Activated CD4-positive, alpha-beta memory T cell treated with anti-CD3 and anti-CD28 coated beads for 36 hours (primary cell): ENCODE measurements at regions of chr17 and their contacts with region 1.

Region 1: DNA sequence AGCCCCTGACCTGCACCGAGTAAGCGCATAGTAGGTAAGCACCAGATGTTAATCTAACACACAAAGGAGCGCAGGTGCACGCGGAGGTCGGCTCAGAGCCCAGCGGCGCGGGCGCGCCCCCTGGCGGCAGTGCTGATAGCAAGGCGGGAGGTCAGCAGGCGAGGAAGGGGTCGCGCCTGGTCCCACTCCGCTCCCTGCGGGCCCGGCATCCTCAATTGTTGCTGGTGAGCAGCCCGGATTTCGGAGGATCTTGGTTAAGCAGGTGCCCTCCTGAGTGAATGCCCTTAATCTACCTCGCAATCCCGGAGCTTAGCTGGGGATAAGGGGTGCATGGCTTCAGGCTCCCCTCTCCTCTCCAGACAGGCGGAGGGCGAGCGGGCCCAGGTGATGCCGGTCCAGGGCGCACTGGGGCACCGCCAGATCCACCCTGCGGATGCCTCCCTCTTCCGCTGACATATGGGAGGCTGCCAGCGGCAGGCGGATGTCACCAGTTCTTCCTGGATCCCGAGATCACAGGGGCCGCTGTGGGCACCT is 4.0 kb upstream of the WNT3 start:
- DNase-seq: peak; percentile 56
- H3K4me3 Mint-ChIP-seq: no peak overlapping the region
- H3K27ac Mint-ChIP-seq: no peak overlapping the region
- H3K4me1 Mint-ChIP-seq: peaks cover 11% of the 10 kb centered on the region
- H3K27me3 Mint-ChIP-seq: peaks cover 45% of the 10 kb centered on the region

Region 2: DNA sequence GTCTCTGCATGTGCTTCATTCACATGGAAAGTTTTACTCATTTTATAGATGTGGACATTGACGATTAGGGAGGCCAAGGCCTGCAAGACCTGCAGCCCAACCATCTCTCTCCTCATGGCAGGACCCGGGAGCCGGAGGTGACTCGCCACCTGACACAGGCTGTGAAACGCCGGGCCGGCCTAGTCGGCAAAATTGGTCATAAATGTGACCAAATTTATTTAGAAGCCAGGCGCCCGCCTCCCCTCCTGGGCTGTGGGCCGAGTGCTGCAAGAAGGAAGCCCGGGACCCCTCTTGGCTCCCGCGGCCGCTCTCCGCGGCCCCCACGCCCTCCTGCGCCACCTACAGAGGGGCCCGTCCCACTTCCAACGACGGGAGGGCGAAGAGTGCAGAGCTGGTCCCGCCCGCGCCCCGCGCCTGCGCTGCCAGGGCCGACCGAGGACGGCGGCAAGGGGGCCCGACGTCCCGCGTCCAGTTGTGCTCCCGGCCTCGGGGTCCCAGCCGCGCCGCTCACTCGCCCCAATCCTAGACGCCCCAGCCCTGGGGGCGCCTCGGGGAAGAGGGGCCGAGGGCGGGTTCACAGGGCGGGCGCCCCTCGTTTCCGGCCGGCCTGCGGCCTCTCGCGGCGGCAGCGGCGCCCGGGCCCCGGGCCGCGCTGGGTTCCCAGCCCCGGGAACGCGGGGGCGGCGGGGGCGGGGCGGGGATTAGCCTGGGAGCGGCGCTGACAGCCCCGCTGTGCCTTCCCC is 51.5 kb before region 1 on chr17:
- CTCF ChIA-PET with region 1: no interaction called
- POLR2A ChIA-PET with region 1: no interaction called
- intact Hi-C with region 1: loop called (anchors 5 kb)
- DNase-seq: peak; percentile 35
- H3K4me3 Mint-ChIP-seq: peak overlapping the region; percentile 43
- H3K27ac Mint-ChIP-seq: no peak overlapping the region
- H3K4me1 Mint-ChIP-seq: peaks cover 11% of the 10 kb centered on the region
- H3K27me3 Mint-ChIP-seq: peaks cover 43% of the 10 kb centered on the region

Region 3: DNA sequence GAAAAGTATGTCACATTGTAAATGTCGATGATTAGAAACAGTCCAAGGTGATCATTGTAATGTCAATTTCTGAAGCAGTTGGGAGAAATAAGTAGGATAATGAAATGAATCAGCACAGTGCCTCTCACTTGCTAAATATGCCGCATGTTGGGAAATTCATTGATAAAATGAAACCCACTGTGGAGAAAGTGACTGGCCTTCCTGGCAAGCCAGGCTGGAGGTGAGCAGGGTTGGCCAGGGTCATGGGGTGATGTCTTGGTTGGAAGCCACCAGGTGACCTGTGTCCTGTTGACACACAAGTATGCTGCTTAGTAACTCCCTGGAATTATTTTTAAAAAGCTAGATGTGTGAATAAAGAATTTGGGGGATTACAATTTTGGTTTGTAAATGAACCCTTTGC is 14.0 kb after region 1 on chr17:
- CTCF ChIA-PET with region 1: interaction called, 11 read pairs
- POLR2A ChIA-PET with region 1: no interaction called
- intact Hi-C with region 1: no loop called
- DNase-seq: no peak
- H3K4me3 Mint-ChIP-seq: no peak overlapping the region
- H3K27ac Mint-ChIP-seq: no peak overlapping the region
- H3K4me1 Mint-ChIP-seq: peaks cover 10% of the 10 kb centered on the region
- H3K27me3 Mint-ChIP-seq: peaks cover 26% of the 10 kb centered on the region

Region 4: GRCh38 chr17:46929413-46929812 is 107.0 kb after region 1 on chr17:
- CTCF ChIA-PET with region 1: no interaction called
- POLR2A ChIA-PET with region 1: no interaction called
- intact Hi-C with region 1: no loop called
- DNase-seq: no peak
- H3K4me3 Mint-ChIP-seq: no peak overlapping the region
- H3K27ac Mint-ChIP-seq: no peak overlapping the region
- H3K4me1 Mint-ChIP-seq: peaks cover 49% of the 10 kb centered on the region
- H3K27me3 Mint-ChIP-seq: no peaks in the 10 kb centered on the region